Sigmoid colon (tissue), 7 donors: ENCODE measurements at regions of chr7 and their contacts with region 1.

Region 1: GRCh38 chr7:76314042-76314721 is 11.7 kb downstream of the HSPB1 start:
- DNase-seq: peak; percentile 98
- H3K4me3 ChIP-seq: no peak overlapping the region
- H3K27ac ChIP-seq: peak overlapping the region in 3 of 4 donors; percentile 1 to 59 (median 35)
- H3K4me1 ChIP-seq: peaks cover 0 to 36% (median 27%) of the 10 kb centered on the region in 4 donors
- H3K27me3 ChIP-seq: no peaks in the 10 kb centered on the region
- CTCF ChIP-seq: peak; percentile 100
- EP300 ChIP-seq: no peak
- POLR2A ChIP-seq: no peak

Region 2: DNA sequence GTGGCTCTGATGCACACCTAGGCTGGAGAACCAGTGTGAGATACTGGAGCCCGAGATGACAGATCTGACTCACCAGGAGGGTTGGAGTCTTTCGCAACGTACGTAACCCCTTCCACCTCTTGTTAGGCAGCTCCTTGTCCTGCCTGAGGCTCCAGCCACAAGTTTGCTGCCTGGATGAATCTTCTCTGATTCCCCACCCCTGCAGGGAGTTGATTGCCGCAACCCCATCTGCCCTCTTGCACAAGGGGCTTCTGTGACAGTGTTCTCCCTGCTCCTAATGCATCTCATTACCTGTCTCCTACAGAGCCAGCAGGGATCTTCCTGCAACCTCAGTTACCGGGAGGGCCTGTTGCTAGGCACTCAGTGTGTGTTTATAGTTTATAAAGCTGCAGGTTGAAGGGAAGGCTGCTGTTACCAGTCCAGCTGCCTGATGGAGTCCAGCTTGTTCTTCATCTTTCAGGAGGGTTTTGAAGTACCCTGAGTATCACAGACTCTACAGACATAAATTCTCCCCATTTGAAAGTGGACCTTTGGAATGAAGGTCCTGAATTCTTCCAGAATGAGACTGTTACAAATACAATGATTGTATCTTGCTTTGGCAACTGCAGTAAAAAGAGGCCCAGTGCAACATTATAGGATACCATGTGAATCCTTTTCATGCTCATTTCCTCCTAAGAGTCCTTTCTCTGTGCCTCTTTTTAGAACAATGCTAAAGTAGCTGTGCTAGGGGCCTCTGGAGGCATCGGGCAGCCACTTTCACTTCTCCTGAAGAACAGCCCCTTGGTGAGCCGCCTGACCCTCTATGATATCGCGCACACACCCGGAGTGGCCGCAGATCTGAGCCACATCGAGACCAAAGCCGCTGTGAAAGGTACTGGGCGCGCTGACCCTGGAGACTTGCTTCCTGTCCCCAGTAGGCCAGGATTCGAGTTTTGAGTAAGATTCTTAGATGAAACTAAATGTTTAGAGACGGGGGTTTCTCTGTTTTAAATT is 259.8 kb before region 1 on chr7:
- intact Hi-C with region 1: no loop called
- DNase-seq: no peak
- H3K4me3 ChIP-seq: no peak overlapping the region
- H3K27ac ChIP-seq: peak overlapping the region; percentile 28 to 69 (median 43)
- H3K4me1 ChIP-seq: peaks cover 0 to 38% (median 27%) of the 10 kb centered on the region in 4 donors
- H3K27me3 ChIP-seq: no peaks in the 10 kb centered on the region
- CTCF ChIP-seq: no peak
- EP300 ChIP-seq: no peak
- POLR2A ChIP-seq: no peak

Region 3: GRCh38 chr7:76071316-76072242 is 242.6 kb before region 1 on chr7:
- intact Hi-C with region 1: loop called (anchors 10 kb)
- DNase-seq: peak; percentile 92
- H3K4me3 ChIP-seq: no peak overlapping the region
- H3K27ac ChIP-seq: peak overlapping the region; percentile 84 to 90 (median 88)
- H3K4me1 ChIP-seq: peaks cover 0 to 33% (median 31%) of the 10 kb centered on the region in 4 donors
- H3K27me3 ChIP-seq: no peaks in the 10 kb centered on the region
- CTCF ChIP-seq: no peak
- EP300 ChIP-seq: peak in 1 of 4 donors; percentile 50
- POLR2A ChIP-seq: no peak

Region 4: DNA sequence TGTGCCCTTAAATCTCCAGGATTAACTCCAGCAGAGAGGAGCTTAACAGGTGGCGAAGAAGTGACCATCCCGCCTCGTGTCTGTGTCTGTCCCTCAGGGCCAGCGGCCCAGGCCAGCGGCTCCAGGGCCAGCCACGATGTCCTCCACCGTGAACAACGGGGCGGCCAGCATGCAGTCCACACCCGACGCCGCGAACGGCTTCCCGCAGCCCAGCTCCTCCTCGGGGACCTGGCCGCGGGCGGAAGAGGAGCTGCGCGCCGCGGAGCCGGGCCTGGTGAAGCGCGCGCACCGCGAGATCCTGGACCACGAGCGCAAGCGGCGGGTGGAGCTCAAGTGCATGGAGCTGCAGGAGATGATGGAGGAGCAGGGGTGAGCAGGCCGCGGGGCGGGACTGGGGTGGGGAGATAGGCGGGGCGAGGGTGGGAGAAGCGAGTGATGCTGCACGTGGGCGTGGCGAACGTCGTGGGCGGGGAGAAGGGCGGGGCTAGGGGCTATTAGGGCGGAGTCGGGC is 79.2 kb before region 1 on chr7:
- intact Hi-C with region 1: no loop called
- DNase-seq: peak; percentile 71
- H3K4me3 ChIP-seq: peak overlapping the region in 2 of 4 donors; percentile 28 to 31
- H3K27ac ChIP-seq: no peak overlapping the region
- H3K4me1 ChIP-seq: peaks cover 0 to 8% (median 6%) of the 10 kb centered on the region in 4 donors
- H3K27me3 ChIP-seq: peaks cover 10 to 85% (median 50%) of the 10 kb centered on the region in 3 donors
- CTCF ChIP-seq: no peak
- EP300 ChIP-seq: no peak
- POLR2A ChIP-seq: no peak

Region 5: GRCh38 chr7:76282344-76283253 is 31.6 kb before region 1 on chr7:
- intact Hi-C with region 1: loop called (anchors 5 kb)
- DNase-seq: no peak
- H3K4me3 ChIP-seq: peak overlapping the region; percentile 12 to 53 (median 48)
- H3K27ac ChIP-seq: no peak overlapping the region
- H3K4me1 ChIP-seq: peaks cover 0 to 21% (median 18%) of the 10 kb centered on the region in 4 donors
- H3K27me3 ChIP-seq: peaks cover 19 to 44% (median 26%) of the 10 kb centered on the region in 3 donors
- CTCF ChIP-seq: no peak
- EP300 ChIP-seq: no peak
- POLR2A ChIP-seq: no peak

Region 6: DNA sequence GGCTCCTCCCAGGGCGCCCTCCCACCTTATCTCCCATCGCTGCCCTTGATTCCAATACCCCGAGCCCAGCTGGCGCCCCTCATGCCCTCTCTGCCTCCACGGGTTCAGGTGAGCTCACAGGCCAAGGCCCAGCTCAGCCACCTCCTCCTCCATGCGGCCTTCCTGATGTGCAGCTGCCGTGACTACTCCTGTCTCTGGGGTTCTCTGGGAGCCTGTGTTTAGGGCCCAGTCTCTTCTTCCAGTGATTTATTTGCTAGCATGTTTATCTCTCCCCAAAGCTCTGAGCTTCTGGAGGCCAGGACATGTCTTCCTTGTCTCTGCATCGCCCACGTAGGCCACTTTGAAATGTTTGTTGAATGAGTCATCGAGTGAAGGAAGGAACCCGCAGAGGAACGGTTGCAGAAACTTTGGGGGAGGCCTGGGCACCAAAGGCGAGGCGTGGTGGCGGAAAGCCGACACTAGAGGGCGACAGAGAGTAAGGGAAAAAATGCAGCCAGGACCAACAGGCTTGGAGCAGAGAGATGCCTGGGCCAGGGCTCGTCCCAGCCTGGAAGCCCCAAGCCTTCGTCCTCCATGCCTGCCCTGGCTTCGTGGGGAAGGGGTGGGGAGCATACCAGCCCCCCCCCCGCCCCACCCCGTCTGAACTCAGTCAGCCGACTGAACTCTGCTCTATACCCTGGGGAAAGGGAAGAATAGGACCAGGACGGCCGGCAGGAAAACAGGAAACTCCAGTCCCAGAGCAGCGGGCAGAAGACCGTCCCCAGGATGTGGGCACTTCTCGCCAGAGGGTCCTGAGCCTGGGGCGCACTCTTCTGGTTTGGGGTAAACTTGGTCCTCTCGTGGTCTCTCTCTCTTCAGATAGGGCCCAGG is 22.6 kb before region 1 on chr7:
- intact Hi-C with region 1: loop called (anchors 1 kb)
- DNase-seq: peak; percentile 97
- H3K4me3 ChIP-seq: peak overlapping the region; percentile 3 to 47 (median 34)
- H3K27ac ChIP-seq: peak overlapping the region; percentile 97 to 100 (median 99)
- H3K4me1 ChIP-seq: peaks cover 0 to 56% (median 53%) of the 10 kb centered on the region in 4 donors
- H3K27me3 ChIP-seq: no peaks in the 10 kb centered on the region
- CTCF ChIP-seq: peak; percentile 94 to 100 (median 98)
- EP300 ChIP-seq: peak in 1 of 4 donors; percentile 26
- POLR2A ChIP-seq: no peak

Region 7: GRCh38 chr7:76359111-76359978 is 45.2 kb after region 1 on chr7:
- intact Hi-C with region 1: loop called (anchors 1 kb)
- DNase-seq: peak; percentile 99
- H3K4me3 ChIP-seq: peak overlapping the region; percentile 60 to 98 (median 82)
- H3K27ac ChIP-seq: peak overlapping the region; percentile 90 to 100 (median 98)
- H3K4me1 ChIP-seq: peaks cover 4 to 45% (median 40%) of the 10 kb centered on the region in 4 donors
- H3K27me3 ChIP-seq: no peaks in the 10 kb centered on the region
- CTCF ChIP-seq: peak; percentile 52 to 79 (median 74)
- EP300 ChIP-seq: peak in 2 of 4 donors; percentile 33 to 58
- POLR2A ChIP-seq: peak; percentile 15 to 50

Region 8: GRCh38 chr7:76509931-76510877 is 196.0 kb after region 1 on chr7 and contains the start of gene UPK3B:
- intact Hi-C with region 1: no loop called
- DNase-seq: peak; percentile 63
- H3K4me3 ChIP-seq: no peak within 1 kb of the TSS
- H3K27ac ChIP-seq: no peak within 1 kb of the TSS
- H3K4me1 ChIP-seq: peaks cover 0 to 7% (median 3%) of the 10 kb centered on the region in 4 donors
- H3K27me3 ChIP-seq: no peaks in the 10 kb centered on the region
- CTCF ChIP-seq: no peak
- EP300 ChIP-seq: no peak
- POLR2A ChIP-seq: no peak
- total RNA-seq, gene UPK3B: 0.27 to 3.9 (median 0.77) TPM